Activated CD4-positive, alpha-beta T cell treated with anti-CD3 and anti-CD28 coated beads for 36 hours (primary cell): ENCODE measurements at regions of chr1 and their contacts with region 1.

Region 1: GRCh38 chr1:91500756-91501522 is at the start of gene CDC7:
- DNase-seq: peak; percentile 93
- ATAC-seq: peak; percentile 88
- H3K4me3 Mint-ChIP-seq: no peak within 1 kb of the TSS
- H3K27ac Mint-ChIP-seq: no peak within 1 kb of the TSS
- H3K4me1 Mint-ChIP-seq: peaks cover 25% of the 10 kb centered on the region
- H3K27me3 Mint-ChIP-seq: no peaks in the 10 kb centered on the region
- total RNA-seq, gene CDC7: 31.1 to 32.0 TPM

Region 2: DNA sequence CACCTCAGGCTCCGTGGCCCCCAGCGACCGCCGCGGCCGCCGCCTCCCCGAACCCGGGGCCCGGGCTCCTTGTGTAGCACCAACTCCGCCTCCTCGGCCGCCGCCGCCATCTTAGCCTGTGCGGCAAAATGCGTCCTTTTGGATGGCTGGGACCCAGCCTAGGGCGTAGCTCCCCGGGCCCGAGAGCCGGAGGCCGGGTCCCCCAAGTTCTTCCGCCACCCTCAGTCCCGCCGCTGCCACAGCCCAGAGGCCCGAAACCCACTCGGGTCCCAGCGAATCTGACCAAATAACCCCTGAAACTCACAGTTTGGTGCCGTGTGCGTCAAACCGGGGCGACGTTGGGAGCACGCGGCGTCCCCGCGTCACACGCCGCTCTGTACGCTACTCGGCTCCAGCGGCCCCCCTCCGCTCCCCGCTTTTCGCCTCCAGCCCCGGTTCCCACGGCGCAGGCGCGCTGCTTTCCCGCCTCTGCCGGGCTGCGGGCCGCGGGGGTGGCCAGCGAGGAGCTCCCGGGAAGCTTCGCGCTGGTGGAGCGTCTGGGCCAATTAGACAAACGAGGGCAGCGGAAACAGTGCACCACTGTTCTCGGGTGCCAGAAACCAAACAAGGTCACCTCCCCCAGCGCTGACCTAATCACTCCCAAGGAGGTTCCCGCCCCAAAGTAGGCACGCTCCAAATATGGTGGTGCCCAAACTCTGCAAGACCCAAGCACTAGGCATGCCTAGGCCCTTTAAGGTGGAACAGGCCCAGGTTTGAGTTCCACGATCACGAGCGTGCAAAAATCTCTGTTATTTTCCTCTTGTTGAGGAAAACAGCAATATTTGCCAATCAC is 479.0 kb before region 1 on chr1 and contains the start of gene ZNF644:
- CTCF ChIA-PET with region 1: no interaction called
- POLR2A ChIA-PET with region 1: no interaction called
- intact Hi-C with region 1: loop called in 1 of 2 experiments (anchors 1 kb)
- DNase-seq: peak; percentile 95
- ATAC-seq: peak; percentile 90
- H3K4me3 Mint-ChIP-seq: peak within 1 kb of the TSS; percentile 94
- H3K27ac Mint-ChIP-seq: peak within 1 kb of the TSS; percentile 97
- H3K4me1 Mint-ChIP-seq: peaks cover 62% of the 10 kb centered on the region
- H3K27me3 Mint-ChIP-seq: no peaks in the 10 kb centered on the region
- total RNA-seq, gene ZNF644: 36.8 to 46.0 TPM

Region 3: GRCh38 chr1:91400135-91400725 is 100.7 kb before region 1 on chr1:
- CTCF ChIA-PET with region 1: no interaction called
- POLR2A ChIA-PET with region 1: no interaction called
- intact Hi-C with region 1: no loop called
- DNase-seq: no peak
- ATAC-seq: no peak
- H3K4me3 Mint-ChIP-seq: no peak overlapping the region
- H3K27ac Mint-ChIP-seq: no peak overlapping the region
- H3K4me1 Mint-ChIP-seq: peaks cover 5% of the 10 kb centered on the region
- H3K27me3 Mint-ChIP-seq: peaks cover 28% of the 10 kb centered on the region

Region 4: GRCh38 chr1:91511386-91511785 is 10.4 kb after region 1 on chr1:
- CTCF ChIA-PET with region 1: interaction called, 25 read pairs
- POLR2A ChIA-PET with region 1: no interaction called
- intact Hi-C with region 1: no loop called
- DNase-seq: no peak
- ATAC-seq: no peak
- H3K4me3 Mint-ChIP-seq: no peak overlapping the region
- H3K27ac Mint-ChIP-seq: no peak overlapping the region
- H3K4me1 Mint-ChIP-seq: peaks cover 6% of the 10 kb centered on the region
- H3K27me3 Mint-ChIP-seq: no peaks in the 10 kb centered on the region

Region 5: GRCh38 chr1:91591175-91591968 is 90.4 kb after region 1 on chr1:
- CTCF ChIA-PET with region 1: no interaction called
- POLR2A ChIA-PET with region 1: no interaction called
- intact Hi-C with region 1: no loop called
- DNase-seq: peak; percentile 13
- ATAC-seq: peak; percentile 65
- H3K4me3 Mint-ChIP-seq: peak overlapping the region; percentile 37
- H3K27ac Mint-ChIP-seq: peak overlapping the region; percentile 42
- H3K4me1 Mint-ChIP-seq: peaks cover 23% of the 10 kb centered on the region
- H3K27me3 Mint-ChIP-seq: peaks cover 2% of the 10 kb centered on the region

Region 6: DNA sequence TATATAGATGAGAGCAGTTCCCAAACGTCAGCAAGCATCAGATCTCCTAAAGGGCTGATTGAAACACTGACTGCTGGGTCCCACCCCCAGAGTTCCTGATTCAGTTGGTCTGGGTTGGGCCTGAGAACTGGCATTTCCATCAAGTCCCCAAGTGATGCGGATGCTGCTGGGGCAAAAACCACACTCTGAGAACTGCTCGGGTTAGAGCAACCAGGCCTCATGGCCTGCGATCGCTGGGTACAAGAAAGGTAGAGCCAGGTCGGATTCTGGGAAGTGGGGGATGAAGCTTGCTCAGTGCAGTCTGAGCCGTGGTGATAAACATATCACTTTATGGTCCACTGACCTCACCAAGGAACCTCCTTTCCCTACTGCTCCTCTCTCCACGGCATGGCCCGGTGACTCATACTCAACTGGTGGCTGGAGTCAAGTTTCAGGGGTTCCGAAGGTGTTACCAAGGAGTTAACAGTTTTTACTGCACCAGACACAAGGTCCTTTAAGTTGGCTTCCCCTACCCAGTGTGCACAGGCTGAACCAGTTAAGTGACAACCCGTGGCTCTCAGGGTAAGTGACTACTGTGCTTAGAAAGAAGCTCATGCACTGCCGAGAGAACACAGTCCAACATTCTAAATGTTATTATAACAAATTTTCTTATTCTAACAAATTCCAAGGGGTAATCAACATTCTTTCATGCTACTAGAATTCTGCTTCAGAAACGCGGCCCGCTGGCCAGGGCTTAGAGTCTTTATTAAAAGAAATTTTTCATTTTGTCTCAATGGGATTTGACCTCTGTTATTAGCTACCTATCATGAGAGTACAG is 231.6 kb after region 1 on chr1:
- CTCF ChIA-PET with region 1: no interaction called
- POLR2A ChIA-PET with region 1: no interaction called
- intact Hi-C with region 1: loop called in 1 of 2 experiments (anchors 5 kb)
- DNase-seq: peak; percentile 58
- ATAC-seq: peak; percentile 47
- H3K4me3 Mint-ChIP-seq: no peak overlapping the region
- H3K27ac Mint-ChIP-seq: peak overlapping the region; percentile 89
- H3K4me1 Mint-ChIP-seq: peaks cover 48% of the 10 kb centered on the region
- H3K27me3 Mint-ChIP-seq: peaks cover 5% of the 10 kb centered on the region

Region 7: GRCh38 chr1:91864017-91864700 is 363.2 kb after region 1 on chr1:
- CTCF ChIA-PET with region 1: no interaction called
- POLR2A ChIA-PET with region 1: no interaction called
- intact Hi-C with region 1: no loop called
- DNase-seq: no peak
- ATAC-seq: no peak
- H3K4me3 Mint-ChIP-seq: no peak overlapping the region
- H3K27ac Mint-ChIP-seq: no peak overlapping the region
- H3K4me1 Mint-ChIP-seq: peaks cover 5% of the 10 kb centered on the region
- H3K27me3 Mint-ChIP-seq: peaks cover 2% of the 10 kb centered on the region

Region 8: DNA sequence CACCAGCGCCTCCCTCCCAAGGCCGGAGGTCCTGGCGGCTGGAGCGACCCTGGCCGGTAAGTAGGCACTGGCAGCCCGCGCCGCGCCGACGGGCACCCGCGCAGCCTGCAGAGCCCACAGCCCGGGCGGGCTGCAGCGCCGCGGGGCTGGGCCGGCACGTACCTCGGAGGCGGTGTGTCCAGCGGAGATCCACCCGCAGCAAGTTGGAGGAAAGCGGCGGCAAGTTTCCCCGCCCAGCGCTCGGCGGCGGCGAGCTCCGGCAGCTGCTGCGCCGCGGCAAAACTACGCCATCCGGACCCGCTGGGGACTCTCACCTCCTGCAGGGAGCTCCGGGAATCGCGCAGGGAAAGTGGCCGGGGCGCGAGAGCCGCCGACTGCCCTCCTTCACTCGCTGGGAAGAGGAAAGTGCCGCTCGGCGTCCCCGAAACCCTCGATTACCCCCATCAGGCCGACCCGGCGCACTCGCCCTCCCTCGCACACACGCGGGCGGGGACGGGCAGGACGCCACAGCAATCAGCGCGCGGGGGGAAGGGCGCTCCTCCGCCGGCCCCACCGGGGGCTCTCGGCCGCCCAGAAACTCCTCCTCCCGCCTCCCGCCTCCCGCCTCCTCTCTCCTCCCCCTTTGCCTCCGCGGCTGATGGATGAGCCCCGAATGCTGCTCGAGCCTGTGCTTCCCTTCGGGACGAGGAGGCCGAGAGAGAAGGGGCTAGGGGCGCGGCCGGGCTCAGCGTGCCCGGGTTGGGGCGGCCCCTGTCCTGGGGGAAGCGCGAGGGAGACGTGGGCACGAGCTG is 385.0 kb after region 1 on chr1 and contains the start of gene TGFBR3:
- CTCF ChIA-PET with region 1: no interaction called
- POLR2A ChIA-PET with region 1: no interaction called
- intact Hi-C with region 1: loop called (anchors 2 to 5 kb)
- DNase-seq: peak; percentile 76
- ATAC-seq: peak; percentile 70
- H3K4me3 Mint-ChIP-seq: peak within 1 kb of the TSS; percentile 87
- H3K27ac Mint-ChIP-seq: peak within 1 kb of the TSS; percentile 80
- H3K4me1 Mint-ChIP-seq: peaks cover 38% of the 10 kb centered on the region
- H3K27me3 Mint-ChIP-seq: peaks cover 16% of the 10 kb centered on the region
- total RNA-seq, gene TGFBR3: 4.2 to 4.5 TPM